Psoas muscle (tissue), 8 donors: ENCODE measurements at regions of chr11 and their contacts with region 1.

Region 1: GRCh38 chr11:115504276-115505158 is at the start of gene CADM1:
- DNase-seq: peak; percentile 92 to 96
- ATAC-seq: peak; percentile 94 to 97 (median 96)
- H3K4me3 ChIP-seq: peak within 1 kb of the TSS; percentile 72
- H3K27ac ChIP-seq: peak within 1 kb of the TSS; percentile 83
- H3K4me1 ChIP-seq: peaks cover 6% of the 10 kb centered on the region
- H3K27me3 ChIP-seq: no peaks in the 10 kb centered on the region
- CTCF ChIP-seq: peak; percentile 57
- total RNA-seq, gene CADM1: 9.5 to 12.4 (median 10.1) TPM

Region 2: GRCh38 chr11:115334932-115335788 is 169.4 kb before region 1 on chr11:
- intact Hi-C with region 1: loop called (anchors 2 to 5 kb)
- DNase-seq: no peak
- ATAC-seq: peak in 1 of 4 donors; percentile 51
- H3K4me3 ChIP-seq: no peak overlapping the region
- H3K27ac ChIP-seq: no peak overlapping the region
- H3K4me1 ChIP-seq: no peaks in the 10 kb centered on the region
- H3K27me3 ChIP-seq: no peaks in the 10 kb centered on the region
- CTCF ChIP-seq: peak; percentile 81